Heart right ventricle (tissue), 16 donors: ENCODE measurements at regions of chr2 and their contacts with region 1.

Region 1: GRCh38 chr2:146214394-146214929 is 1630.4 kb upstream of the ACVR2A start:
- DNase-seq: no peak
- ATAC-seq: no peak
- H3K4me3 ChIP-seq: no peak overlapping the region
- H3K27ac ChIP-seq: no peak overlapping the region
- H3K4me1 ChIP-seq: no peaks in the 10 kb centered on the region
- H3K27me3 ChIP-seq: no peaks in the 10 kb centered on the region
- CTCF ChIP-seq: no peak

Region 2: DNA sequence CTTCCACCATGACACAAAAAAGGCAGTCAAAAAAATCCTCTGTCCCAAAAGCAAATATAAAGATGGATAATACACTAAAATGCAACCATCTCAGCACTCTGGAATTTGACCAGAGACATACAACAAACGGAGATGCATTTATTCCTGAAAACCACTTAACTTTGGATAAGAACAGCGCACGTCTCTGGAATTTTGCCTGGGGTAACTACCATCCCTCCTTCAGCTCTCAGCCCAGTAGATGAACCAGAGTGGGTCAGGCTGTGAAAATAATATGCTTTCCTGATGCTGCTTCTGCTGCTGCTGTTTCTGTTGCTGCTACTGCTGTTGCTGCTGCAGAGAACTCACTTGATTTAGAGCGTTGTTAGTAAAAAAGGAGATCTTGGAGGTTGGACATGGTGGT is 1496.6 kb after region 1 on chr2:
- intact Hi-C with region 1: loop called in 1 of 10 experiments (anchors 5 kb)
- DNase-seq: no peak
- ATAC-seq: no peak
- H3K4me3 ChIP-seq: no peak overlapping the region
- H3K27ac ChIP-seq: no peak overlapping the region
- H3K4me1 ChIP-seq: no peaks in the 10 kb centered on the region
- H3K27me3 ChIP-seq: no peaks in the 10 kb centered on the region
- CTCF ChIP-seq: no peak